T-cell (primary cell): ENCODE measurements at regions of chr17 and their contacts with region 1.

Region 1: DNA sequence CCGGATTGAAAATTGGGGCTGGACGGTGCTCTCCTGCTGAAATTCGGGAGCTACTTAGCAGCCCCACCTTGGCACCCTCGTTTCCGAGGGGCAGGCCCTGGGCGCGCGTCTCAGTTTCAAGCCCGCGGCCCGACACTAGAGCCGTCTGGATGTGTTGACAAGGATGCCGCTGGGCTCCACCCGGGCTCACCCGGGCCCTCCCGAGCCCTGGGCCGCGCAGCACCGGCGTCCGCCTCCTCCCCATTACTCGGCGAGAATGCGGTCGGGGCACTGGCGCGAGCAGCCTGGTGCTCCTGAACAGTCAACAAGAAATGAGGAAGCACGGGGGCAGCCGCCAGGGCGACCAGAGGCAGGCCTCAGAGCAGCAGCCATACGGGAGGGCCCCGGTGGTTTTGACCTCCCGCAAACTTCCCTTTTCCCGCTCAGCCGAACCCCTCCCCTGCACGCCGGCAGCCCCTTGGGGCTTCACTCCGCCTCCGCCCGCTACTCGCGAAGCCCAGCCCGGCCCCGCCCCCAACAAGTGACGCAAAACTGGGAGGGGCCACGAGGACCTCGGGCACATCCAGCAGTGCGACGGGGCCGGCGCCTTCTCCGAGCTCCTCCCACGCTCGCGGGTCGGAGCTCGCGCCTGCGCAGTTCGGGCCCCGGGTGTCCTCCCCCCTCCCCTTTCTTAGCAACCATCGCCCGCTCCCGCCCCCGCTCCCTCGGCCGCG is 447 bp upstream of the SEC14L1 start:
- DNase-seq: peak; percentile 98 to 100 (median 99)
- ATAC-seq: peak; percentile 89 to 94 (median 90)
- H3K4me3 ChIP-seq: peak overlapping the region; percentile 66 to 76
- H3K4me3 Mint-ChIP-seq: peak overlapping the region; percentile 75 to 86 (median 82)
- H3K27ac ChIP-seq: peak overlapping the region; percentile 84
- H3K27ac Mint-ChIP-seq: peak overlapping the region; percentile 32 to 81
- H3K4me1 ChIP-seq: peaks cover 11 to 37% of the 10 kb centered on the region in 2 experiments
- H3K4me1 Mint-ChIP-seq: peaks cover 51 to 67% (median 64%) of the 10 kb centered on the region in 3 donors
- H3K27me3 ChIP-seq: no peaks in the 10 kb centered on the region
- H3K27me3 Mint-ChIP-seq: no peaks in the 10 kb centered on the region

Region 2: DNA sequence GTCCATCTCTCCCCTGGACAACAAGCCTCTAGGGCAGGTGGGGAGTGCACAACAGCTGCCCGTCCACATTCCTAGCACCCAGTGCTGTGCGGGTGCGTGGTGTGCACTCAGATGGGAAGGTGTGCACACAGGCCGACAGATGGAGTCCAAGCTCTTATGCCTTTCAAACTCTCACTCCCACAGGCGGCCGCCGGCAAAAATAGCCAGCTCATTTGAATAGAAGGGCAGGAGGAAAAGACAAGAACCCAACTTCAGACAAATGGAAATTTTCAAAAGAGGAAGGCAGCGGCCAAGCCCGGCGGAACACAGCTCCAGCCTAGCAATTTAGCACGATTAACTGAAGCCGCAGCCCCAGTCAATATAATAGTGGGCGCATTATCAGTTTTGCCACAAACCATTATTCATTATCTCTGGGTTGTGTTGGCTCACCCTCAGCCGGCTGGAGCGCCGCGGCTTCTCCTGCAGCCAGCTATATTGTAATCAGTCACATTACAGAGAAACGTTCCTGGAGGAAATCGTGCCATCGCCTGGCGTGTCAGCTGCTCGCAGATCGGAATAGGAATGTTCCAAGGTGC is 103.4 kb before region 1 on chr17:
- CTCF ChIA-PET with region 1: no interaction called
- POLR2A ChIA-PET with region 1: no interaction called
- DNase-seq: no peak
- ATAC-seq: no peak
- H3K4me3 ChIP-seq: no peak overlapping the region
- H3K4me3 Mint-ChIP-seq: no peak overlapping the region
- H3K27ac ChIP-seq: no peak overlapping the region
- H3K27ac Mint-ChIP-seq: peak overlapping the region in 1 of 2 donors; percentile 55
- H3K4me1 ChIP-seq: no peaks in the 10 kb centered on the region
- H3K4me1 Mint-ChIP-seq: no peaks in the 10 kb centered on the region
- H3K27me3 ChIP-seq: peaks cover 0 to 41% of the 10 kb centered on the region in 2 experiments
- H3K27me3 Mint-ChIP-seq: peaks cover 13 to 21% of the 10 kb centered on the region in 2 donors

Region 3: GRCh38 chr17:77088455-77089123 is 51.7 kb before region 1 on chr17:
- CTCF ChIA-PET with region 1: interaction called in 1 of 2 experiments, 22 read pairs
- POLR2A ChIA-PET with region 1: interaction called, 3 read pairs
- DNase-seq: peak; percentile 69 to 92 (median 82)
- ATAC-seq: peak; percentile 87 to 93 (median 93)
- H3K4me3 ChIP-seq: peak overlapping the region; percentile 66 to 94
- H3K4me3 Mint-ChIP-seq: peak overlapping the region; percentile 94 to 98 (median 96)
- H3K27ac ChIP-seq: peak overlapping the region; percentile 82
- H3K27ac Mint-ChIP-seq: peak overlapping the region; percentile 91 to 98
- H3K4me1 ChIP-seq: peaks cover 14 to 51% of the 10 kb centered on the region in 2 experiments
- H3K4me1 Mint-ChIP-seq: peaks cover 52 to 59% (median 56%) of the 10 kb centered on the region in 3 donors
- H3K27me3 ChIP-seq: peaks cover 0 to 16% of the 10 kb centered on the region in 2 experiments
- H3K27me3 Mint-ChIP-seq: peaks cover 0 to 9% of the 10 kb centered on the region in 2 donors

Region 4: GRCh38 chr17:77127735-77128361 is 12.5 kb before region 1 on chr17:
- CTCF ChIA-PET with region 1: interaction called in 1 of 2 experiments, 22 read pairs
- POLR2A ChIA-PET with region 1: interaction called, 3 to 8 read pairs
- DNase-seq: peak; percentile 31 to 95 (median 79)
- ATAC-seq: peak; percentile 94 to 96 (median 94)
- H3K4me3 ChIP-seq: peak overlapping the region; percentile 33 to 39
- H3K4me3 Mint-ChIP-seq: peak overlapping the region; percentile 71 to 75 (median 72)
- H3K27ac ChIP-seq: peak overlapping the region; percentile 86
- H3K27ac Mint-ChIP-seq: peak overlapping the region; percentile 95 to 98
- H3K4me1 ChIP-seq: peaks cover 6 to 21% of the 10 kb centered on the region in 2 experiments
- H3K4me1 Mint-ChIP-seq: peaks cover 24 to 28% (median 26%) of the 10 kb centered on the region in 3 donors
- H3K27me3 ChIP-seq: no peaks in the 10 kb centered on the region
- H3K27me3 Mint-ChIP-seq: no peaks in the 10 kb centered on the region

Region 5: GRCh38 chr17:77312786-77313599 is 172.7 kb after region 1 on chr17:
- CTCF ChIA-PET with region 1: no interaction called
- POLR2A ChIA-PET with region 1: no interaction called
- DNase-seq: no peak
- ATAC-seq: no peak
- H3K4me3 ChIP-seq: no peak overlapping the region
- H3K4me3 Mint-ChIP-seq: no peak overlapping the region
- H3K27ac ChIP-seq: no peak overlapping the region
- H3K27ac Mint-ChIP-seq: no peak overlapping the region
- H3K4me1 ChIP-seq: peaks cover 0 to 7% of the 10 kb centered on the region in 2 experiments
- H3K4me1 Mint-ChIP-seq: peaks cover 0 to 8% (median 0%) of the 10 kb centered on the region in 3 donors
- H3K27me3 ChIP-seq: peaks cover 0 to 11% of the 10 kb centered on the region in 2 experiments
- H3K27me3 Mint-ChIP-seq: peaks cover 0 to 3% of the 10 kb centered on the region in 2 donors

Region 6: DNA sequence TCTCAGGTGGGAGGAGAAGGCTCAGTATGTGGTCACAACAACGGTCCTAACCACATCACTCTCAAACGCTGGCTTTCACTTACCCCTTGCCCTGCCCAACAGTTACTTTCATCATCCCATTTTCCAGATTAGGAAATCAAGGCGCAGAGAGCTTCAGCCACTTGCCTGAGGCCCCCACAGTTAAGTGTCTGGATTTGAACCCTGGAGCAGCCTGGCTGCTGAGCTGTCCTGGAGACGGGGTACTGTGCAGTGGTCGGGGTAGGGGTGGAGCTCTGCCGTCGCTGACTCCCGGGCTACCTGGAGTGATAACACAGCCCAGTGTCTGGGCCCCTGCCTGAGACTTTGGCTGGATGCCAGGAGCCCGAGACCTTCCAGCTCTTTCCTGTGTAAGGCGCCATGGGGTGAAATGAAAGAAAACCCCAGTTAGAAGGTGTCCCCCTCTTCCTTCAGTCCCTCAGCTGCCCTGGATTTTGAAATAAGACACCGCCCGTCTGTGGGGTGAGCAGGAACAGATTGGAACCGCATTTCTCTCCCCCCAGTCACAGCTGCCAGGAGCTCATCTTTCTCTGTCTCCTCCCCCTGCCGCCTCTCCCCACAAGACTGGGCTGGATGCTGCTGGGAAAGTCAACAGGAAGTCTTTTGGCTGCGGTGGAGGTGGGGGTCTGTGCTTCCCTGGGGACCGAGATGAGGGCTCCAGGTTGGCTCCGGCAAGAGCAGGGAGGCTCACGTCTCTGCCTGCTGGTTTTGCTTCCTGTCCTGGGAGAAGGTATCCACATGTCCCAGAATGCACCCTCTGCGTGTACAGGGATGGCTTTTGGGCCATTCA is 280.7 kb after region 1 on chr17:
- CTCF ChIA-PET with region 1: no interaction called
- POLR2A ChIA-PET with region 1: interaction called in 1 of 2 experiments, 13 read pairs
- DNase-seq: peak in 30 of 35 experiments; percentile 32 to 76 (median 50)
- ATAC-seq: peak; percentile 44 to 67 (median 50)
- H3K4me3 ChIP-seq: peak overlapping the region; percentile 28 to 38
- H3K4me3 Mint-ChIP-seq: peak overlapping the region; percentile 62 to 81 (median 73)
- H3K27ac ChIP-seq: peak overlapping the region; percentile 68
- H3K27ac Mint-ChIP-seq: peak overlapping the region; percentile 94 to 95
- H3K4me1 ChIP-seq: peaks cover 49 to 93% of the 10 kb centered on the region in 2 experiments
- H3K4me1 Mint-ChIP-seq: peaks cover 56 to 70% (median 66%) of the 10 kb centered on the region in 3 donors
- H3K27me3 ChIP-seq: no peaks in the 10 kb centered on the region
- H3K27me3 Mint-ChIP-seq: no peaks in the 10 kb centered on the region

Region 7: GRCh38 chr17:78313735-78314648 is 1173.7 kb after region 1 on chr17:
- CTCF ChIA-PET with region 1: no interaction called
- POLR2A ChIA-PET with region 1: interaction called in 1 of 2 experiments, 19 read pairs
- DNase-seq: peak; percentile 32 to 74 (median 57)
- ATAC-seq: peak; percentile 80 to 84 (median 81)
- H3K4me3 ChIP-seq: peak overlapping the region; percentile 26 to 39
- H3K4me3 Mint-ChIP-seq: peak overlapping the region; percentile 67 to 78 (median 68)
- H3K27ac ChIP-seq: no peak overlapping the region
- H3K27ac Mint-ChIP-seq: peak overlapping the region; percentile 84 to 95
- H3K4me1 ChIP-seq: peaks cover 22 to 43% of the 10 kb centered on the region in 2 experiments
- H3K4me1 Mint-ChIP-seq: peaks cover 41 to 52% (median 50%) of the 10 kb centered on the region in 3 donors
- H3K27me3 ChIP-seq: peaks cover 0 to 9% of the 10 kb centered on the region in 2 experiments
- H3K27me3 Mint-ChIP-seq: no peaks in the 10 kb centered on the region